ENCODE measurements at regions of chr14 and their contacts with region 1.

Region 1: DNA sequence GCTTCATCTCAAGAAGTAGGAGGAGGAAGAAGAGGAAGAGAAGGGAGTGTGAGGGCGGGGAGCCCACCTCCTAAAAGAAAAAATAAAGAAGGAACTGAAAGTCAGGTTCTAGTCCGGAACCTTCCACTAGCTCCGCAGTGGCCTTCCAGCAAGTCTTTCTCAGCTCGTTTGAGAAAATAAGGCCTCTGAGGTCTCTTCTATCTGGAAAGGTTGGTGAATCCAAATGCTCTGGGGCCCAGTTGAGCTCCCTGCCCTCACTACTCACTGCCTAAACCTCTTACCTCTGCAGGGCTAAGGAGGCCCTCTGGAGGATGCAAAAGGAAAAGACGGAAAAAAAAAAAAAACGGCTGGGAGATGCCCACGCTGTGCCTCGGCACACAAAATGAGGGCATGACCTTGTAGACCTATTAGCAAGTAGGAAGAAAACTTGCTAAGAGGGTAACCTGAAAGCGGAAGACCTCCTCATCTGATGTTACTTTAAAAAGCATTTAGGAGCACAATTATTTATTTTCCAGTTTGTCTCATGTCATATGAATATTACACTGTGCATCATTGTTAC is 35.9 kb downstream of the FBLN5 start:
- DNase-seq: peak; percentile 49
- H3K4me3 ChIP-seq: no peak overlapping the region
- H3K27ac ChIP-seq: no peak overlapping the region
- H3K4me1 ChIP-seq: no peaks in the 10 kb centered on the region
- H3K27me3 ChIP-seq: no peaks in the 10 kb centered on the region
- CTCF ChIP-seq: peak; percentile 25 to 62
- POLR2A ChIP-seq: no peak

Region 2: DNA sequence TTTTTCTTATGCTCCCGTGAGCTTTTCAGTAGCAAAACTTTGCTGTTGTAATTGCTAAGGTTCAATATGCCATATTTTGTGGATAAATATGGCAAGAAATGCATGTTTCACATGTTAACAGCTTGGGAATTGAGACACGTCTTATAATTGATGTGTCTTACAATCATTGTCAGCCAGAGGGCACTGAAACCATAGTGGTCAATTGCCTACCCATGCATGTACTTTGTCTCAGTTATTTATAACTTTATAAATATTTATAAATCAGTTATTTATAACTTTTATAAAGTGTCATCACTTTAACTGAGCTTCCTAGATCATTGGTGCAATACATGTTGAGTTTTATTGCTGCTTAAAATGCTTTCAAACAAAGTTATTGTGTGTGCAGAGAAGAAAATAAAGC is 261.6 kb before region 1 on chr14:
- CTCF ChIA-PET with region 1: interaction called, 30 read pairs
- POLR2A ChIA-PET with region 1: no interaction called
- dilution Hi-C with region 1: no loop called
- intact Hi-C with region 1: loop called (anchors 1 kb)
- DNase-seq: peak; percentile 57
- H3K4me3 ChIP-seq: no peak overlapping the region
- H3K27ac ChIP-seq: no peak overlapping the region
- H3K4me1 ChIP-seq: no peaks in the 10 kb centered on the region
- H3K27me3 ChIP-seq: no peaks in the 10 kb centered on the region
- CTCF ChIP-seq: peak in 1 of 2 donors; percentile 30
- POLR2A ChIP-seq: no peak

Region 3: DNA sequence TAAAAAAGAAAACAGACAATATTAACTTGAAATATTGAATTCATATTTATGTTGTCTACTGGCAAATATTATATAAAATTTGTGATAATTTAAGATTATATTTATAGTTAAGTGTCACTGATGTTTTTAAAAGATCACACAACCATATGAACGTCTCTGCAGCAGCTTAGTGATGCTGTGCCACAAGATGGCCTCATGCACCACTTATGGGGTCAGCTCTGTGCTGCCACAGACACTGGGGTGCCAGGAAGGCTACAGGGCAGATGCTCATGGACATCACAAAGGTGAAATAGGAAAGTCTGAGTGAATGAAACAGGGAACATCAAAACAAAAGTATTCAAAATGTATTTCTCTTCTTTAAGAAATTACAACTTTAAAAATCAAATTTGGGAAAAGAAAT is 181.8 kb after region 1 on chr14:
- CTCF ChIA-PET with region 1: no interaction called
- POLR2A ChIA-PET with region 1: no interaction called
- dilution Hi-C with region 1: no loop called
- intact Hi-C with region 1: no loop called
- DNase-seq: no peak
- H3K4me3 ChIP-seq: no peak overlapping the region
- H3K27ac ChIP-seq: no peak overlapping the region
- H3K4me1 ChIP-seq: no peaks in the 10 kb centered on the region
- H3K27me3 ChIP-seq: no peaks in the 10 kb centered on the region
- CTCF ChIP-seq: no peak
- POLR2A ChIP-seq: no peak

Measured in endothelial cell of umbilical vein (primary cell).